GM12878 (cell line): ENCODE measurements at regions of chr19 and their contacts with region 1.

Region 1: GRCh38 chr19:4342615-4343369 is 570 bp upstream of the MPND start:
- DNase-seq: peak; percentile 100
- ATAC-seq: peak; percentile 95
- H3K4me3 ChIP-seq: peak overlapping the region; percentile 86
- H3K27ac ChIP-seq: peak overlapping the region; percentile 82
- H3K4me1 ChIP-seq: peaks cover 12% of the 10 kb centered on the region
- H3K27me3 ChIP-seq: no peaks in the 10 kb centered on the region
- CTCF ChIP-seq: peak; percentile 9 to 18 (median 12); a peak in 2 of 6 replicates
- EP300 ChIP-seq: no peak
- POLR2A ChIP-seq: peak; percentile 92
- RAD21 ChIP-seq: no peak

Region 2: GRCh38 chr19:4301509-4302242 is 41.1 kb before region 1 on chr19:
- CTCF ChIA-PET with region 1: no interaction called
- POLR2A ChIA-PET with region 1: no interaction called
- RAD21 ChIA-PET with region 1: no interaction called
- SMC1A ChIA-PET with region 1: no interaction called
- in situ Hi-C with region 1: no loop called
- intact Hi-C with region 1: no loop called
- DNase-seq: no peak
- ATAC-seq: no peak
- H3K4me3 ChIP-seq: no peak overlapping the region
- H3K27ac ChIP-seq: no peak overlapping the region
- H3K4me1 ChIP-seq: no peaks in the 10 kb centered on the region
- H3K27me3 ChIP-seq: no peaks in the 10 kb centered on the region
- CTCF ChIP-seq: no peak
- EP300 ChIP-seq: no peak
- POLR2A ChIP-seq: no peak
- RAD21 ChIP-seq: no peak

Region 3: GRCh38 chr19:4328243-4328990 is 14.4 kb before region 1 on chr19:
- CTCF ChIA-PET with region 1: interaction called, 5 read pairs
- POLR2A ChIA-PET with region 1: interaction called, 17 read pairs
- RAD21 ChIA-PET with region 1: interaction called, 12 read pairs
- SMC1A ChIA-PET with region 1: interaction called, 3 read pairs
- in situ Hi-C with region 1: no loop called
- intact Hi-C with region 1: no loop called
- DNase-seq: peak; percentile 75
- ATAC-seq: peak; percentile 92
- H3K4me3 ChIP-seq: peak overlapping the region; percentile 75
- H3K27ac ChIP-seq: no peak overlapping the region
- H3K4me1 ChIP-seq: peaks cover 8% of the 10 kb centered on the region; the same call in 1 of the 2 replicates
- H3K27me3 ChIP-seq: no peaks in the 10 kb centered on the region
- CTCF ChIP-seq: no peak; a peak in 1 of 6 replicates
- EP300 ChIP-seq: no peak
- POLR2A ChIP-seq: peak; percentile 88
- RAD21 ChIP-seq: no peak